ENCODE measurements at regions of chr20 and their contacts with region 1.

Region 1: GRCh38 chr20:33162753-33163152 is 5.2 kb upstream of the BPIFA2 start:
- DNase-seq: no peak
- ATAC-seq: no peak
- H3K4me3 ChIP-seq: no peak overlapping the region
- H3K27ac ChIP-seq: no peak overlapping the region
- H3K4me1 ChIP-seq: no peaks in the 10 kb centered on the region
- H3K27me3 ChIP-seq: peaks cover 0 to 34% of the 10 kb centered on the region in 2 experiments; a peak in 2 of 5 replicates
- CTCF ChIP-seq: no peak
- EP300 ChIP-seq: no peak
- POLR2A ChIP-seq: no peak
- RAD21 ChIP-seq: no peak

Region 2: DNA sequence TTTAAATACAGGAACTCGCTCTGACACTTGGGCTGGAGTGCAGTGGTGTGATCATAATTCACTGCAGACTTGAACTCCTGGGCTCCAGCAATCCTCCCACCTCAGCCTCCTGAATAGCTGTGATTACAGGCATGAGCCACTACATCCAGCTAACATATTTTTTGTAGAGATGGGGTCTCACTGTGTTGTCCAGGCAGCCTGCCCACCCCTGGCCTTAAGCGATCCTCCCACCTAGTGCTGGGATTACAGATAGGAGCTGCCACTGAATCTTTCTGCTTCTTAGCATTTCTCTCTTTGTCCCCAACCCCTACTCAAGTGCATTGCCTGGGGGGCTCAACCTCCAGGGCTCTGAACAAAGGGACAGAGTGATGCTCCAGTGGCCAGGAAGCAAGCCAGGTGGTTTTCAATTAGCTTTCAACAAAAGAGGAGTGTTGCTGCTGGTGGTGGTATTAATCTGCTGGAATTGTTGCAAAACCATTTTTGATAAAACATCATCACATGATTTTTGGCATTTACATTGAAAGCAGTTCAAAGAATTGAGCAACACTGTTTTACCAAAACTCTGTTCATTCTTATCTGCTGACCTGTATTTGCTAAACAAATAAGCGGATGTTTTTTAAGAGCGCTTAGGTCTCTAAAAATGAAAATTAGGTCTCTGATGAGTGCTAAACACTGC is 35.2 kb before region 1 on chr20:
- CTCF ChIA-PET with region 1: no interaction called
- POLR2A ChIA-PET with region 1: no interaction called
- in situ Hi-C with region 1: no loop called
- intact Hi-C with region 1: loop called (anchors 1 kb)
- DNase-seq: peak; percentile 79
- ATAC-seq: peak; percentile 20; the same call in 2 of the 3 replicates
- H3K4me3 ChIP-seq: no peak overlapping the region
- H3K27ac ChIP-seq: no peak overlapping the region
- H3K4me1 ChIP-seq: peaks cover 25% of the 10 kb centered on the region
- H3K27me3 ChIP-seq: peaks cover 0 to 31% of the 10 kb centered on the region in 2 experiments; a peak in 1 of 5 replicates
- CTCF ChIP-seq: no peak
- EP300 ChIP-seq: peak in 1 of 2 experiments; percentile 70; a peak in 2 of 4 replicates
- POLR2A ChIP-seq: no peak
- RAD21 ChIP-seq: no peak

Region 3: GRCh38 chr20:33249456-33249855 is 86.7 kb after region 1 on chr20:
- CTCF ChIA-PET with region 1: no interaction called
- POLR2A ChIA-PET with region 1: no interaction called
- in situ Hi-C with region 1: no loop called
- intact Hi-C with region 1: no loop called
- DNase-seq: no peak
- ATAC-seq: no peak
- H3K4me3 ChIP-seq: no peak overlapping the region
- H3K27ac ChIP-seq: no peak overlapping the region
- H3K4me1 ChIP-seq: no peaks in the 10 kb centered on the region
- H3K27me3 ChIP-seq: no peaks in the 10 kb centered on the region
- CTCF ChIP-seq: no peak
- EP300 ChIP-seq: no peak
- POLR2A ChIP-seq: no peak
- RAD21 ChIP-seq: no peak